GM18951 (cell line): ENCODE measurements at regions of chr9 and their contacts with region 1.

Region 1: GRCh38 chr9:72280913-72281500 is 84.0 kb downstream of the ZFAND5 start:
- POLR2A ChIP-seq: no peak

Region 2: DNA sequence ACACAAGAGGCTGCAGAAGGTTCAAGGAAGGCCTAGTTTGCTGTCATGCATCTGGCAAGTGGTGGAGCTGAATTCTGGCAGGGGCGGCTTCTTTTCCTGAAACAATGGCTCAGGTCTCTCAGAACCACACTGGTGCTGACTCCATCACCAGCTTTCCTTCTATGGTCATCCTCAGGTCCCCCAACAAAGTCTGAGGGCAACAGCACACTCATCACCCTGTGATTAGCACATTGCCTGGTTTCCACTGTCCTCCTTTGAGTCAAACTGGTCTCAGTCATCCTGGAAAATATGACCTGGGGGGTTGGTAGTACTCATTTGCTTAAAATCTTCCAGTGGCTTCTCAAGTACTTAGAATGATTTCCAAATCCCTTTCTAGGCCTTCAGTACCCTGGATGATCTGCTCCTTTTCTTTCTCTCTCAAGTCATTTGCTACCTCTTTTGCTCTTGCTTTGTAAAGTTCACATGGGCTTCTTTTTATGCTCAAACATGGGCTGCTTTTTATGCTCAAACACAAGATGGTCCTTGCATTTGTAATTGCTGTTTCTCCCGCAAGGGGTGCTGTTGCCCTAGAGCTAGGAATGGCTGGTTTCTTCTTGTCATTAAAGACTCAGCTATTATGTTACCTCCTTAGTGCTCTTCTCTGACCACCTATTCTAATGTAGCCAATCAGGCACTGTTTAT is 526.9 kb after region 1 on chr9:
- in situ Hi-C with region 1: loop called (anchors 25 kb)
- POLR2A ChIP-seq: no peak